ENCODE measurements at regions of chr9 and their contacts with region 1.

Region 1: DNA sequence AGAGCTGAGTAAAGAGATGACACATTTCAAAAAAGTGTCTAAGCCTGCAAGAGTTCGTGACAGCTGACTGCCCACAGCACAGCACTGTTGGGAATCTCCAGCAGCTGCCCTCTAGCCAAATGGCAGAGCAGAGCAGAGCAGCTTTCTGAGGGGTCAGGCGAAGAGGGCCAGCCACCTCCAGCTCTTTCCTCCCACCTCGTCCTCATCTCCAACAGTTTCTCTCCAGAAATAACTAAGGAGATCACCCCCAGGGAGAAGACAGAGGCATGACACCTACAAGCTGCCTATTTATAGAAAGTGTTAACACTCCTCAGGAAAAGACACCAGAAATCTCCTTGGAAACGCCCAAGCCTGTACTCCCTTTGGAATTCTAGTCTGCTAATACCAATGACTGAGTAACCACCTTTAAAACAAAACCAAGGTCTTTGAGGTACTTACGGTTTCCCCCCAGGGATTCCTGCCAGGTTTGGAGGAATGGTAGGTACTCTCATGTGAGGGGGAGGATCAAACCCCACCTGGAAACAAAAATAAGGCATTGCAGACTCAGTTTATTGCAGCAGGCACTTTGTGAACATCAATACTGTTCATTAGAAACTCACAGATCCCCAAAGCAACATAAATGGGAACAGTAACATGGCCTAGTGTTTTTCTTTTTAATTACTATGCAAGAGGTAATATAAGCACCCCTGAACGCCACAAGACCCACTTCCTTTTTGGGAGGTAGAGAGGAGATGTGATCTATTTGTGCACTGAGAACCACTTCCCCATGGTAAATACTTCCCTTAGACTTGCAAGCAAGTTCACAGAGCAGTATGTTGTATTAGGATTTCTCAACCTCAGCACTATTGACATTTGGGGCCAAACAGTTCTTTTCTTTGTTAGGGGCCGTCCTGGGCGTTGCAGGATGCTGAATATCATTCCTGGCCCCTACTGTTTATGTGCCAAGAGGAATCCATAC is 79.3 kb downstream of the TLE1 start:
- DNase-seq: no peak
- ATAC-seq: no peak

Region 2: DNA sequence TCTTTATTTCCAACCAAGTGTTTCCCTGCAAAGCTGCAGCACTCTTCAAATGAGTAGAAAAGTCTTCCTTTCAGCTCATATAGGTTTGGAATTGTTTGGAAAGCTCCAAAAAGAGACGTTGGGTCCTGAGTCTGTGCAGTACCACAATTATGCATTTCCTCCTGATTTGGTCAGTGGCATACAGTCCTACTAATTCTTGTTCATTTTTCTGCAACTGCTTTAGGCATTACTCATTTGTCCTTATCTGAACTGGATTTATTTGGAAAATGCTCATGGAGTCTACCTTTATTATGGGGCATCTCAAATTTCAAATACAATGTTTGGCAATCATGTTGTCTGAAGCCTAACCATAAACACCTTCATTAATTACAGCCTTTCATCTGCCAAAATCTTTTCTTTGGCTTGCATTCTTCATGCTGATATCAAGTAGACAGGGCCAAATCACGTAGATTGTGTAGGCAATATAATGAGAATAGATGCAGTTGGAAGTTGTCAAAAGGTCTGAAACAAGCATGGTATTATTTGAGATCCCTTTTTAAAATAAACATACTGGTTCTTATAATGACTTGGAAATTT is 153.5 kb before region 1 on chr9:
- intact Hi-C with region 1: no loop called
- DNase-seq: no peak
- ATAC-seq: no peak

Region 3: GRCh38 chr9:81671880-81672280 is 61.8 kb after region 1 on chr9:
- intact Hi-C with region 1: loop called in 1 of 2 experiments (anchors 10 kb)
- DNase-seq: peak; percentile 61 to 85
- ATAC-seq: peak; percentile 37

Region 4: DNA sequence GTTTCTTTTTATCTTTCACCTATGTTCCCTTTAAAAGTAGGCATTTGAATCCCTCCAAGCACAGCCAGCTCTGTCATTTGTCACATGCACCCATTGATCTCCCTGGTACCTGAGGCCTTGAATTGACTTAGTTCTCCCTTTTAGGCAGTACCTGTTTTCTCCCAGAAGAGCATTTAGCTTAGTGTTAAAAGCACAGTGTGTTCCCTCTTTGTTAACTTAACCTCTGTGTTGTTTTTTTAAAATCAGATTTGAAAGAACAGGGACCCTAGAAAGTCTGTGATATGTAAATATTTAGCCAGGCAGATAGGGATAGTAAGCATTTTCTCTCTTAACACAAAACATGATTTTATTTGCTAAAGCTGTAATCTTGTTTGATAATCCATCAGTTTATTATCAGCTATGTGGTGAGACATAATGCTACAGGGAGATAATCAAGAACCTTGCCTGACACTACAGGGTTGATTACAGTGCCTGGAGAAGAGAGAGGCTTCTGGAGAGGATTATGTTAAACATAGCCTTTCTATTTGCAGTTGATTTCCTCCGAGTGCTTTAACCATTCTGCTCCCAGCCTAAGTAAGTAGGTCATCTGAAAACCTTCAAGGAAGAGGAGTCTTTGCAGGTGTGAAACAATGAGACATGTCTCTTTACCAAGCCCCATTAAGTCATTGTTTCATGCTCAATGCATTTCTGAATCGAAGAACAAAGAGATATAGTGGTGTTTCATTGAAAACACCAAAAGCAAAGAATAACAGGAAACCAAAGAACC is 204.5 kb after region 1 on chr9:
- intact Hi-C with region 1: loop called in 1 of 2 experiments (anchors 10 kb)
- DNase-seq: no peak
- ATAC-seq: peak; percentile 35